CD4-positive, alpha-beta memory T cell (primary cell): ENCODE measurements at regions of chr13 and their contacts with region 1.

Region 1: GRCh38 chr13:50090212-50090611 is 75.0 kb downstream of the KCNRG start:
- DNase-seq: no peak
- H3K4me3 ChIP-seq: no peak overlapping the region
- H3K4me3 Mint-ChIP-seq: no peak overlapping the region
- H3K27ac ChIP-seq: no peak overlapping the region
- H3K27ac Mint-ChIP-seq: no peak overlapping the region
- H3K4me1 ChIP-seq: peaks cover 27% of the 10 kb centered on the region
- H3K4me1 Mint-ChIP-seq: peaks cover 6 to 22% (median 8%) of the 10 kb centered on the region in 4 donors
- H3K27me3 ChIP-seq: no peaks in the 10 kb centered on the region
- H3K27me3 Mint-ChIP-seq: no peaks in the 10 kb centered on the region

Region 2: GRCh38 chr13:50106559-50106958 is 16.3 kb after region 1 on chr13:
- CTCF ChIA-PET with region 1: interaction called, 25 read pairs
- POLR2A ChIA-PET with region 1: interaction called, 6 read pairs
- intact Hi-C with region 1: loop called (anchors 2 kb)
- DNase-seq: no peak
- H3K4me3 ChIP-seq: no peak overlapping the region
- H3K4me3 Mint-ChIP-seq: peak overlapping the region in 7 of 8 donors; percentile 21 to 88 (median 65)
- H3K27ac ChIP-seq: peak overlapping the region; percentile 36
- H3K27ac Mint-ChIP-seq: peak overlapping the region; percentile 36 to 93 (median 86)
- H3K4me1 ChIP-seq: peaks cover 52% of the 10 kb centered on the region
- H3K4me1 Mint-ChIP-seq: peaks cover 35 to 66% (median 48%) of the 10 kb centered on the region in 4 donors
- H3K27me3 ChIP-seq: no peaks in the 10 kb centered on the region
- H3K27me3 Mint-ChIP-seq: no peaks in the 10 kb centered on the region